ENCODE measurements at regions of chr4 and their contacts with region 1.

Region 1: GRCh38 chr4:176393306-176394013 is 73.7 kb downstream of the SPCS3 start:
- DNase-seq: no peak
- H3K4me3 ChIP-seq: peak overlapping the region in 1 of 2 experiments; percentile 39; a peak in 1 of 4 replicates
- H3K27ac ChIP-seq: peak overlapping the region; percentile 5 to 72; a peak in 1 of 4 replicates
- H3K4me1 ChIP-seq: no peaks in the 10 kb centered on the region; a peak in 2 of 4 replicates
- H3K27me3 ChIP-seq: no peaks in the 10 kb centered on the region
- CTCF ChIP-seq: no peak
- EP300 ChIP-seq: no peak
- RAD21 ChIP-seq: no peak

Region 2: DNA sequence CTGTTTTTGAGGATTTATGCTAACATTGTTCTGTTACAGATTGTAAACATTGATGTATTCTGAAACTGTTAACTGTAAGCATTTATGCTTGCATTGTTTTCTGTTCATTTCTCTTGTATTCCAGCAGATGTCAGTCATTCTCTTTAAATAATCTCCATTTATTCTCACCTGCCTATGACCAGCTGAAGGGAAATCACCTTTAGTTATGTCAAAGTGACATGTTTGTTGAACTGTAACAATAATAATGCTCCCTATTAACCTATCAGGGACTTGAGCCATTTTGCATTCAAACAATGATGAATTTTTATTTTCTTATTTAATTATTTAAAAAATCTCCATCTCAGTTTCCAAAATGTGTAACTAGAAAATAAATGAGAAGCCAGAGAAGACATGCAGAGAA is 15.7 kb before region 1 on chr4:
- CTCF ChIA-PET with region 1: interaction called, 10 read pairs
- POLR2A ChIA-PET with region 1: no interaction called
- DNase-seq: peak; percentile 5
- H3K4me3 ChIP-seq: no peak overlapping the region
- H3K27ac ChIP-seq: peak overlapping the region in 1 of 2 experiments; percentile 62; a peak in 1 of 4 replicates
- H3K4me1 ChIP-seq: no peaks in the 10 kb centered on the region; a peak in 2 of 4 replicates
- H3K27me3 ChIP-seq: no peaks in the 10 kb centered on the region
- CTCF ChIP-seq: peak; percentile 77
- EP300 ChIP-seq: no peak
- RAD21 ChIP-seq: peak; percentile 72

Region 3: GRCh38 chr4:176451445-176451844 is 58.0 kb after region 1 on chr4:
- CTCF ChIA-PET with region 1: no interaction called
- POLR2A ChIA-PET with region 1: no interaction called
- DNase-seq: no peak
- H3K4me3 ChIP-seq: no peak overlapping the region
- H3K27ac ChIP-seq: no peak overlapping the region
- H3K4me1 ChIP-seq: no peaks in the 10 kb centered on the region
- H3K27me3 ChIP-seq: no peaks in the 10 kb centered on the region
- CTCF ChIP-seq: no peak
- EP300 ChIP-seq: no peak
- RAD21 ChIP-seq: no peak

Region 4: DNA sequence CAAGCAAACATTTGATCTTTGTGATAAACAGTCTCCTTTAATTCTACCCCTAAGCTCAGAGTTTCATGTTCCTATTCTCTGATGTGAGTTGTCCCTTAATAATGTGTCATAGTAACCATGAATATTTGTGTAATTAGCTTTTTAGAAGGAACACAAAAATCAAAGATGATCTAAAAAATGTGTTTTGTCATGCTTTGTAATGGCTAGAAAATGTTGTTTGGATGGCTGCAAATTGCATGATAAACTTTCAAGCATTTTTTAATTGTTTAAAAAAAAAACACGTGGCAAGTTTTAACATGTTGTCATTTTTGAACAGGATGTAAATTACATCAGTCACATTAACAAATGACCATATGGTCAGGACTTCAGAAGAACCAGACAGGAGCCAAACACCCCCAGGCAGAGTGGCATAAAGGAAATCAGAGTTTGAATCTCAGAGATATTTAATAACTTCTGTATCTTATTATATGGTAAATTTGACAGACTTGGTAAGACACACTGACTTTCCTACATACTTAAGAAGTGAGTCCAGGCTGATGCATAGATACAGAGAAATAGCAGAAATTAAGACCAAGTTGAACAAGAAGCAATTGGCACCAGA is 623.2 kb after region 1 on chr4:
- CTCF ChIA-PET with region 1: no interaction called
- POLR2A ChIA-PET with region 1: no interaction called
- DNase-seq: no peak
- H3K4me3 ChIP-seq: no peak overlapping the region
- H3K27ac ChIP-seq: peak overlapping the region; percentile 47 to 76; a peak in 3 of 4 replicates
- H3K4me1 ChIP-seq: peaks cover 0 to 3% of the 10 kb centered on the region in 2 experiments; a peak in 1 of 4 replicates
- H3K27me3 ChIP-seq: no peaks in the 10 kb centered on the region
- CTCF ChIP-seq: no peak
- EP300 ChIP-seq: peak in 1 of 2 experiments; percentile 23; a peak in 1 of 4 replicates
- RAD21 ChIP-seq: no peak